Activated CD4-positive, alpha-beta memory T cell treated with anti-CD3 and anti-CD28 coated beads for 36 hours (primary cell): ENCODE measurements at regions of chr17 and their contacts with region 1.

Region 1: DNA sequence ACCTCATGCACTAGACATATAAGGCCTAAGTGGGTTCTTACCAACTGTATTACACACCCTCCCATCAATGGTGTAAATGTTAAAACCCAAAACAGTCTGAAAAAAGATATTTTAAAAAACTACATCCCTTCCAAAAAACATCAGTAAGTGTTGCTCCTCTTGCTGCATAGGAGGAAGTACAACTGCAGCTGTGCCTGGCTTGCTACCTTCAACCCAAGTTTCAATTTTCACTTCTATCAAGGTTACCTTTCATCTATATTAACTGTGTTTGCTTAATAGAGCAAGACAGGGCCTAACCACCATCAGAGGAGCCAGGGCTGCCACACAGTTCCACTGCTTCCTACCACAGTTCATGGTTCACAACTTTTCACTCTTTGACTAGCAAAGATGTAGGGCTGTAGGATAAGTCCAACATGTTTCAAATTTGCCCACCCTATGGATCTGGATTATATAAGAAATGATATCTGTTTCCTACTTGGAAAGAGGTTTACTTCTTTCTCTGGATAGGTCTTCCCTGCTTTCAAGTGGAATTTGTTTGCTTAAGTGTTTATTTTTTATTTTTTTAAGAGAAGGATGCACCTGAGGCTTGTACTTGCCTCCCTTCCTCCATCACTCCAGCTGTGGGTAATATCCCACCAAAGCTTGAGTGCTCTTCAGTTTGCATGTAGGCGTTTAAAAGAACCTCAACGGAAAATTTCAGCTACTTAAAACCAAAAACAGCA is 56.7 kb downstream of the GRB7 start:
- DNase-seq: peak; percentile 41
- H3K4me3 Mint-ChIP-seq: peak overlapping the region; percentile 2
- H3K27ac Mint-ChIP-seq: peak overlapping the region; percentile 83
- H3K4me1 Mint-ChIP-seq: peaks cover 76% of the 10 kb centered on the region
- H3K27me3 Mint-ChIP-seq: no peaks in the 10 kb centered on the region

Region 2: GRCh38 chr17:39769974-39770587 is 24.3 kb before region 1 on chr17:
- CTCF ChIA-PET with region 1: interaction called, 14 read pairs
- POLR2A ChIA-PET with region 1: interaction called, 61 read pairs
- intact Hi-C with region 1: loop called (anchors 1 kb)
- DNase-seq: peak; percentile 82
- H3K4me3 Mint-ChIP-seq: no peak overlapping the region
- H3K27ac Mint-ChIP-seq: peak overlapping the region; percentile 85
- H3K4me1 Mint-ChIP-seq: peaks cover 96% of the 10 kb centered on the region
- H3K27me3 Mint-ChIP-seq: no peaks in the 10 kb centered on the region

Region 3: GRCh38 chr17:39777534-39778365 is 16.7 kb before region 1 on chr17:
- CTCF ChIA-PET with region 1: interaction called, 14 read pairs
- POLR2A ChIA-PET with region 1: interaction called, 61 read pairs
- intact Hi-C with region 1: loop called (anchors 1 kb)
- DNase-seq: no peak
- H3K4me3 Mint-ChIP-seq: peak overlapping the region; percentile 80
- H3K27ac Mint-ChIP-seq: peak overlapping the region; percentile 88
- H3K4me1 Mint-ChIP-seq: peaks cover 84% of the 10 kb centered on the region
- H3K27me3 Mint-ChIP-seq: no peaks in the 10 kb centered on the region

Region 4: GRCh38 chr17:39813631-39814030 is 19.2 kb after region 1 on chr17:
- CTCF ChIA-PET with region 1: interaction called, 8 read pairs
- POLR2A ChIA-PET with region 1: interaction called, 7 read pairs
- intact Hi-C with region 1: loop called (anchors 1 kb)
- DNase-seq: peak; percentile 64
- H3K4me3 Mint-ChIP-seq: peak overlapping the region; percentile 70
- H3K27ac Mint-ChIP-seq: peak overlapping the region; percentile 89
- H3K4me1 Mint-ChIP-seq: peaks cover 70% of the 10 kb centered on the region
- H3K27me3 Mint-ChIP-seq: no peaks in the 10 kb centered on the region

Region 5: GRCh38 chr17:39822051-39822451 is 27.6 kb after region 1 on chr17:
- CTCF ChIA-PET with region 1: interaction called, 8 read pairs
- POLR2A ChIA-PET with region 1: interaction called, 11 read pairs
- intact Hi-C with region 1: loop called (anchors 1 kb)
- DNase-seq: peak; percentile 50
- H3K4me3 Mint-ChIP-seq: no peak overlapping the region
- H3K27ac Mint-ChIP-seq: peak overlapping the region; percentile 38
- H3K4me1 Mint-ChIP-seq: peaks cover 60% of the 10 kb centered on the region
- H3K27me3 Mint-ChIP-seq: no peaks in the 10 kb centered on the region

Region 6: DNA sequence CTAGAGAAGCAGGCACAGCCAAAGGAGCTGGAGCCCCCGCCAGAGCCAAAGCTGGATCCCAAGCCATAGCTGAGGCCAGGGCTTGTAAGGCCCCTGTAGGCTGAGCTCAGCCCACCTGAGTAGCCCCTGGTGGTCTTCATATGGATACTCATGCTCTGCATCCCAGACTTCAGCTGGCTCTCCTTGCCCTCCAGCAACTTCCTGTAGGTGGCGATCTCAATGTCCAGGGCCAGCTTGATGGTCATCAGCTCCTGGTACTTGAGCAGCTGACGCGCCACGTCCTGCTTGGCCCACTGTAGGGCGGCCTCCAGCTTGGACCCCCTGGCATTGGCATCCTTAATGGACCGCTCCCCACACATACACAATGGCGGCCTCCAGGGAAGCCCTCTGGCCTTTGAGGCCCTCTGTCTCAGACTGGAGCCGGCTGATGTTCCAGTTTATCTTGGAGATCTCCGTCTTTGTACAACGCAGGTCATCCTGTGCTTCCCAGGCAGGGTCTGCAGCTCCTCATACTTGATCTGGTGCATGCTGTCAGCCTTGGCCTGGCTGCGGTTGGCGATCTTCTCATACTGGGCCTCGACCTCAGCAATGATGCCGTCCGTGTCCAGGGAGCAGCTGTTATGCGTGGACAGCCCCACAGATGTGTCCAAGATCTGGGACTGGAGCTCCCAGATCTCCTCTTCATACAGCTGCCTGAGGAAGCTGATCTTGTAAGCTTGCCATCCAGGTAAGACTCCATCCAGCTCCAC is 40.8 kb after region 1 on chr17:
- CTCF ChIA-PET with region 1: interaction called, 5 read pairs
- POLR2A ChIA-PET with region 1: interaction called, 3 read pairs
- intact Hi-C with region 1: loop called (anchors 2 kb)
- DNase-seq: no peak
- H3K4me3 Mint-ChIP-seq: no peak overlapping the region
- H3K27ac Mint-ChIP-seq: peak overlapping the region; percentile 9
- H3K4me1 Mint-ChIP-seq: peaks cover 26% of the 10 kb centered on the region
- H3K27me3 Mint-ChIP-seq: no peaks in the 10 kb centered on the region